ENCODE measurements at regions of chr1 and their contacts with region 1.

Region 1: DNA sequence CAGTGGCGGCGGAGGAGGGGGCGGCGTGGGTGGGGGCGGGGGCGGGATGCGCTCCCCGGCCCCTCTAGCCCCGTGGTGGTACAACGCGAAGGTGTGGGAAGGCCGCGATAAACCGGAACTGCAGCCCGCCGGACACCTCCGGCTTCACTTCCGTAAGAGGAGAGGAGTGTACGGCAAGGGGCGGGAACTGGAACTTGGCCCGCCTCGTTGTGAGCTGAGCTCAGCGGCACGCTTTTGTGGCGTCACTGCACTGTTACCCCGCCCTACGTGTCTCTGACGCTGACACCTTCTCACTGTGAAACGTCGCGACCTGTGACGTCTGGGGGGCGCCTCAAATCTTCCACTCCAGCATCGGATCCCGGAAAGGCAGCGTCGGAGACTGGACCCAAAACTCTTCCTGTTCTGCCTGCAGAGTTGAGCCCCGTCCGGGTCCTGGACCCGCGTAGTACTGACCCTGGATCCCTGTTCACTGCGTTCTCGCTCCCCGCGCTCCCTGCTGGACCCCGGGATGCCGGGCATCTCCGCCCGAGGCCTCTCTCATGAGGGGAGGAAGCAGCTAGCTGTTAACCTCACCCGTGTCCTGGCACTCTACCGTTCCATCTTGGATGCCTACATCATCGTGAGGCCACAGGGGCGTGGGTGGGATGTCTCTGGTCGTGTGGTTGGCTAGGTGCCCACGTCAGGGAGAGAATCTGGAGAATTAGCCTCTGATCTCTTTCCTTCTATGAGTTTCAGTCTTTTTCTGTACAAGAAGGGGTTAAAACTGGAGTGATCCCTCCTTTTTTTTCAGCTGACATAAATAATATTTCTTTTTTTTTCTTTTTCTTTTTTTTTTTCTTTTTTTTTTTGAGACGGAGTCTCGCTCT is at the start of gene ISG20L2:
- DNase-seq: peak; percentile 99
- ATAC-seq: peak; percentile 94
- H3K4me3 Mint-ChIP-seq: no peak within 1 kb of the TSS
- H3K27ac Mint-ChIP-seq: no peak within 1 kb of the TSS
- H3K4me1 Mint-ChIP-seq: peaks cover 23% of the 10 kb centered on the region
- H3K27me3 Mint-ChIP-seq: no peaks in the 10 kb centered on the region
- CTCF ChIP-seq: no peak
- total RNA-seq, gene ISG20L2: 40.6 to 44.5 TPM

Region 2: GRCh38 chr1:156659994-156660751 is 68.7 kb before region 1 on chr1:
- CTCF ChIA-PET with region 1: interaction called, 69 read pairs
- POLR2A ChIA-PET with region 1: no interaction called
- intact Hi-C with region 1: no loop called
- DNase-seq: peak; percentile 97
- ATAC-seq: peak; percentile 88
- H3K4me3 Mint-ChIP-seq: peak overlapping the region; percentile 75
- H3K27ac Mint-ChIP-seq: peak overlapping the region; percentile 89
- H3K4me1 Mint-ChIP-seq: peaks cover 45% of the 10 kb centered on the region
- H3K27me3 Mint-ChIP-seq: peaks cover 27% of the 10 kb centered on the region
- CTCF ChIP-seq: peak; percentile 98

Region 3: GRCh38 chr1:156705918-156706656 is 22.7 kb before region 1 on chr1:
- CTCF ChIA-PET with region 1: interaction called, 108 read pairs
- POLR2A ChIA-PET with region 1: interaction called, 3 read pairs
- intact Hi-C with region 1: no loop called
- DNase-seq: peak; percentile 87
- ATAC-seq: peak; percentile 67
- H3K4me3 Mint-ChIP-seq: peak overlapping the region; percentile 75
- H3K27ac Mint-ChIP-seq: peak overlapping the region; percentile 75
- H3K4me1 Mint-ChIP-seq: peaks cover 34% of the 10 kb centered on the region
- H3K27me3 Mint-ChIP-seq: peaks cover 19% of the 10 kb centered on the region
- CTCF ChIP-seq: peak; percentile 99

Region 4: GRCh38 chr1:156751758-156752757 is 23.2 kb after region 1 on chr1:
- CTCF ChIA-PET with region 1: interaction called, 80 read pairs
- POLR2A ChIA-PET with region 1: interaction called, 60 read pairs
- intact Hi-C with region 1: no loop called
- DNase-seq: peak; percentile 97
- ATAC-seq: peak; percentile 83
- H3K4me3 Mint-ChIP-seq: peak overlapping the region; percentile 92
- H3K27ac Mint-ChIP-seq: peak overlapping the region; percentile 95
- H3K4me1 Mint-ChIP-seq: peaks cover 26% of the 10 kb centered on the region
- H3K27me3 Mint-ChIP-seq: no peaks in the 10 kb centered on the region
- CTCF ChIP-seq: no peak

Region 5: DNA sequence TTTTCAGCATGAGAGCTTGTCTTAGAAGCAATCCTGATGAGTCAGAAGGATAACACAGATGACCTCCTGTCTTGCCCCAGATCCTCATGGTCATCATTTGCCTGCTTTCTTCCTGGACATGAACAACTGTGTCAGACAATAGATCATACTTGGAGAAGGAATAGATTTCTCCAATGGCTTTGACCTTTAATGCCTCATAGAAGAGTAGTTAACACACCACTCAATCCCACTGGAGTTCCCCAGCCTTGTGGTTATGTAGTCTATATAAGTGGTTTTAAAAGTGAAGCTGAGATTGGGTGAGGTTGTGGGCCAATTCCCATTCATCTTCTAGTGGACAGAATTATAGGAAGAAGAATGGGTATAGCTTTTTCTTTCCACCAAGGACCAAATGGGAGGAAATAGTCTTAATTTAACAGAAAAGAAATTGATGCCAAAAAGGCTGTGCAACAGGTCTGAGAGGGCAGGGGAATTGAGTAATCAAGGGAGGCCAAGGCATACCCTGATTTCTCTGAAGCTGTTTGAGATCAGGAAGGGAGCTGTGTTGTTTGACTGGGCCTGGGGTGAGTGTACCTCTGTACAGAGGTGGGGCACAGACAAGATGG is 52.9 kb after region 1 on chr1:
- CTCF ChIA-PET with region 1: interaction called, 28 read pairs
- POLR2A ChIA-PET with region 1: interaction called, 5 read pairs
- intact Hi-C with region 1: no loop called
- DNase-seq: no peak
- ATAC-seq: no peak
- H3K4me3 Mint-ChIP-seq: no peak overlapping the region
- H3K27ac Mint-ChIP-seq: no peak overlapping the region
- H3K4me1 Mint-ChIP-seq: peaks cover 30% of the 10 kb centered on the region
- H3K27me3 Mint-ChIP-seq: no peaks in the 10 kb centered on the region
- CTCF ChIP-seq: no peak

Region 6: DNA sequence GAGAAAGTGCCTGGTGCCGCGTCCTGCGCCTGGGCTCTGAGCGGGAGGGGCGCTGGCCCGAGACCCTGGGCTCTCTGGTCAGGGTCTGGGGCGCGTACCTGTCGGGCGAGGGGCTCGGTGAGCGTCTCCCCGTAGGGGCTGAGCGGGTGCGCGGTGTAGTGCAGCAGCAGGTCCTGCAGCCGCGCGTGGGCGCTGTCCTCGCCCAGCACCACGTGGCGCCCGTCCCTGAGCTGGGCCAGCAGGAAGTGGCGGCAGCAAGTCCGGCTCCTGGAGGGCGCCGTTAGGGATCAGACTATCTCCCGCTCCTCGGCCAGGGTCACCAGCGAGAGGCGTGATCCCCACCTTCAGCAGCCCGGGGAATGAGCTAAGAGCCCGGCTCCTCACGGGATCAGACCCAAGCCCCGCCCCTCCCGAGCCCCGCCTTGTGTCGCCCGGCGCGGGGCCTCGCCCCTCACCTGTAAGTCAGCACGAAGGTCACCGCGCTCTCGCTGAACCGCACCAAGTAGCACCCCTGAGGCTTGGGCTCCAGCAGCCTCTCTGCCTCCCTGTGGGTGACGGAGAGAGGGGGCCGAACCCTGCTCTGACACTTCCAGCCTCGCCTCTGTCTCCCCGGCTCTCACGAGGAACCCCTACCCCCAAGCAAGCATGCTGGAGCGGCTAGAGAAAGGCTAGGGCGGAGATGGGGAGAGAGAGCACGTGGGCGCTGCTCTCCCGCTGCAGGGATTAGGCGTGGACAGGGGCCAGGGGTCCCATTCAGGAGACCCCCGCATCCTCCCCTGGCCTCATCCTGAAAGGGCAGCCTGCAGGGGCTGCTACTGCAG is 85.1 kb after region 1 on chr1:
- CTCF ChIA-PET with region 1: interaction called, 11 read pairs
- POLR2A ChIA-PET with region 1: interaction called, 5 read pairs
- intact Hi-C with region 1: loop called (anchors 5 kb)
- DNase-seq: peak; percentile 85
- ATAC-seq: peak; percentile 34
- H3K4me3 Mint-ChIP-seq: peak overlapping the region; percentile 94
- H3K27ac Mint-ChIP-seq: peak overlapping the region; percentile 99
- H3K4me1 Mint-ChIP-seq: peaks cover 58% of the 10 kb centered on the region
- H3K27me3 Mint-ChIP-seq: no peaks in the 10 kb centered on the region
- CTCF ChIP-seq: peak; percentile 44

Region 7: DNA sequence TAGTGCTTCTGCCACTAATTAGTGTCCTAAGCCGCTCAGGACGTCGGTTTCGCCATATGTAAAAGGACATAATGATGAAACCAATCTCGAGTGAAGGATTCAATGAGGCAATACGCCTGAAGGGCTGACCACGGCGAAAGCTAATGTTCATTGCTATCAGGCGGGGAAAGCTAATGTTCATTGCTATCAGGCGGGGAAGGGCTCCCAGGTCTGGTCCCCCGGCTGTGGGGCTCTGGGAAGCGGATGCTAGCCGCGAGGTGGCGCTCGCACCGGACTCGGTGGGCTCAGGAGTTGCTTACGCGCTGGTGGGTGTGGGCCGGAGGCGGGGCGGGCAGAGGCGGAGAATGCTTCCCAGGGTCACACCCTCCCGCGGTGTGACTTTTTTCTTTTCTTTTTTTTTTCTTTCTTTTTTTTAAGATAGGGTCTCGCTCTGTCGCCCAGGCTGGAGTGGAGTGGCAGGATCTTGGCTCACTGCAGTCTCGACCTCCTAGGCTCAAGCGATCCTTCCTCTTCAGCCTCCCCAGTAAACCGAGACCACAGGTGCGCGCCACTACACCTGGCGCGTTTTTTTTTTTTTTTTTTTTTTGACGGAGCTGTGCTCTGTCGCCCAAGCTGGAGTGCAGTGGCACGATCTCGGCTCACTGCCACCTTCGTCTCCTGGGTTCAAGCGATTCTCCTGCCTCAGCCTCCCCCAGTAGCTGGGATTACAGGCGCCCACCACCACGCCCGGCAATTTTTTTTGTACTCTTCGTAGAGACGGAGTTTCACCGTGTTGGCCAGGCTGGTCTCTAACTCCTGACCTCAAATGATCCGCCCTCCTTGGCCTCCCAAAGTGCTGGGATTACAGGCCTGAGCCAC is 163.6 kb after region 1 on chr1:
- CTCF ChIA-PET with region 1: interaction called, 34 read pairs
- POLR2A ChIA-PET with region 1: no interaction called
- intact Hi-C with region 1: no loop called
- DNase-seq: peak; percentile 95
- ATAC-seq: peak; percentile 96
- H3K4me3 Mint-ChIP-seq: peak overlapping the region; percentile 35
- H3K27ac Mint-ChIP-seq: no peak overlapping the region
- H3K4me1 Mint-ChIP-seq: peaks cover 7% of the 10 kb centered on the region
- H3K27me3 Mint-ChIP-seq: peaks cover 49% of the 10 kb centered on the region
- CTCF ChIP-seq: peak; percentile 76

Measured in activated CD8-positive, alpha-beta T cell treated with anti-CD3 and anti-CD28 coated beads for 36 hours (primary cell).